ENCODE measurements at regions of chr15 and their contacts with region 1.

Region 1: DNA sequence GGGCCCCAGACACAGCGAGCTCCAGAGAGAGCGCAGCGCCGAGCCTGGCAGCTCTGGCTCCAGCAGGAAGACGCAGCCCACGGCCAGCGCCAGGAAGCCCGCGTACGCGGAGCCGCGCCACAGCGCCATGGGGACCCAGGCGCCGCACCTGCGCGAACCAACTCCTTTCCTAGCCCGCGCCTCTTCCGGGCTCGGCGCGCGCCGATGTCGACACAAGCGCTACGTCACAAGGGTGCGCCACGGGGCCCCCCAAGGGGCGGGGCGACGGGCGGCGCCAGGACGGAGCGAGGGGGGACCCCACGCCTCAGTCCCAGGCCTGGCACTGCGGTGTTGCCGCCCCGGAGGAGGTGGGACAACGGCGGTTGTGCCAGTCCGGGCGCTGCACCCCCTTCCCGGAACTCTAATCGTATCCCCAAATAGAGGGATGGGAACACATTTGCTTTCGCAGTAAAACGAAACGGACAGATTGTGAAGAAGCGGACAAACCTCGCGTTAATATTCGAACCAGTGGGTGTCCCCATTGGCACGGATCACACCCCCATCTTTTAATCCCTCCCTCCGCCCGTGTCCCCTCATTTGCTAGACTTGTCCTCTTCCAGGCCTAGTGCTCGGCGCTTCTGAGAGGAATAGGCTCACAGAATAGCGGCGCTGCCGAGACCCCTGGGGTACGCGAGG is at the start of gene ADPGK:
- DNase-seq: peak; percentile 88 to 98 (median 94)
- ATAC-seq: peak; percentile 74
- H3K4me3 ChIP-seq: peak within 1 kb of the TSS; percentile 94
- H3K4me3 Mint-ChIP-seq: peak within 1 kb of the TSS; percentile 96
- H3K27ac ChIP-seq: peak within 1 kb of the TSS; percentile 91 to 93
- H3K27ac Mint-ChIP-seq: peak within 1 kb of the TSS; percentile 98
- H3K4me1 ChIP-seq: peaks cover 50% of the 10 kb centered on the region
- H3K4me1 Mint-ChIP-seq: peaks cover 50% of the 10 kb centered on the region
- H3K27me3 ChIP-seq: no peaks in the 10 kb centered on the region
- H3K27me3 Mint-ChIP-seq: no peaks in the 10 kb centered on the region
- CTCF ChIP-seq: no peak
- total RNA-seq, gene ADPGK: 88.8 to 92.5 TPM

Region 2: GRCh38 chr15:72057548-72058091 is 726.1 kb before region 1 on chr15:
- CTCF ChIA-PET with region 1: no interaction called
- POLR2A ChIA-PET with region 1: no interaction called
- intact Hi-C with region 1: no loop called
- DNase-seq: no peak
- ATAC-seq: no peak
- H3K4me3 ChIP-seq: no peak overlapping the region
- H3K4me3 Mint-ChIP-seq: no peak overlapping the region
- H3K27ac ChIP-seq: no peak overlapping the region
- H3K27ac Mint-ChIP-seq: no peak overlapping the region
- H3K4me1 ChIP-seq: peaks cover 8% of the 10 kb centered on the region
- H3K4me1 Mint-ChIP-seq: peaks cover 32% of the 10 kb centered on the region
- H3K27me3 ChIP-seq: no peaks in the 10 kb centered on the region
- H3K27me3 Mint-ChIP-seq: no peaks in the 10 kb centered on the region
- CTCF ChIP-seq: no peak

Region 3: DNA sequence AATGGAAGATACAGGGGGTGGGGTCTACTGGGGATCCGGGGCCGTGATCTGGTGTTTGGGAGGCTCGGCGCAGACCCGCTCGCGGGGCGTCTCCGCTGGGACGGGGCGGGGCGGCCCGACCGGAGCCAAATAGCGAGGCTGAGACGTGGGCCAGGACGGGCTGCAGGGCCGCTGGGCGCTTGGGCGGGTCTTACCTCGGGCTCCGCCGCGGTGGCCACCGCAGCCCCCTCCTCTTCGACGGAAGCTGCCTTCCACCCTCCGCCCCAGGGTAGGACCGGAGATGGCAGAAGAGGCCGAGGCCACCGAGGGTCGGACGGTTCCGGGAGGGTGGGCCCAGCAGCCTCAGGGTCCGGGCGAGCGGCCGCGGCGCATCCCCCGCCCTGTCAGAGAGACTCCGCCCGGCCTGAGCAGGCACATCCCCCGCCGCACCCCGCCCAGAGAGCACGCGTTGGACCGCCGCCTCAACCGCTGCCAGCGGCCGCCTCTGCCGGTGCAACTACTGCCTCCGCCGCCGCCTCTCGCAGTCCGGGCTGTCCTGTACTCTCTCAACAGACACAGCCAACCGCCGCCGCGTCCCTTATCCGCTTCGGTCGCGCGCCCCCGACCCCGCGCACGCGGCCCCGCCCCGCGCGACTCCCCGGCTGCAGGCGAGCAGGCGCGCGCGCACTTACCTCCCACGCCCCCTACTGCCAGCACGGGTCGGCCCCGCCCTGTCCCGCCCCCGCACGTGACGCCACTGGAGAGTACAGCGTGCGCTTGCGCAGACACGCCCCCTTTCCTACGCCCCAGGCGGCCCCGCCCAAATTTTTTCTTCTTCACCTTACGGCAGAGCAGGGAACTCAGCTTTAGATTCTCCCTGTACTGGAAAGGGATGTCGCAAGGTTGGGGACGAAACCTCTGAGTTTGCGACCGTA is 666.0 kb before region 1 on chr15 and contains the start of gene MYO9A:
- CTCF ChIA-PET with region 1: no interaction called
- POLR2A ChIA-PET with region 1: no interaction called
- intact Hi-C with region 1: loop called in 1 of 2 experiments (anchors 5 kb)
- DNase-seq: peak; percentile 97 to 99 (median 99)
- ATAC-seq: peak; percentile 79
- H3K4me3 ChIP-seq: peak within 1 kb of the TSS; percentile 74
- H3K4me3 Mint-ChIP-seq: peak within 1 kb of the TSS; percentile 98
- H3K27ac ChIP-seq: peak within 1 kb of the TSS; percentile 91 to 92
- H3K27ac Mint-ChIP-seq: peak within 1 kb of the TSS; percentile 97
- H3K4me1 ChIP-seq: peaks cover 15% of the 10 kb centered on the region
- H3K4me1 Mint-ChIP-seq: peaks cover 60% of the 10 kb centered on the region
- H3K27me3 ChIP-seq: no peaks in the 10 kb centered on the region
- H3K27me3 Mint-ChIP-seq: no peaks in the 10 kb centered on the region
- CTCF ChIP-seq: no peak
- total RNA-seq, gene MYO9A: 23.4 to 29.1 TPM

Region 4: GRCh38 chr15:72473614-72474465 is 309.9 kb before region 1 on chr15 and contains the start of gene ARIH1:
- CTCF ChIA-PET with region 1: no interaction called
- POLR2A ChIA-PET with region 1: no interaction called
- intact Hi-C with region 1: loop called in 1 of 2 experiments (anchors 5 kb)
- DNase-seq: peak; percentile 91 to 99 (median 96)
- ATAC-seq: peak; percentile 68
- H3K4me3 ChIP-seq: peak within 1 kb of the TSS; percentile 87
- H3K4me3 Mint-ChIP-seq: peak within 1 kb of the TSS; percentile 89
- H3K27ac ChIP-seq: peak within 1 kb of the TSS; percentile 100
- H3K27ac Mint-ChIP-seq: peak within 1 kb of the TSS; percentile 99
- H3K4me1 ChIP-seq: peaks cover 36% of the 10 kb centered on the region
- H3K4me1 Mint-ChIP-seq: peaks cover 62% of the 10 kb centered on the region
- H3K27me3 ChIP-seq: no peaks in the 10 kb centered on the region
- H3K27me3 Mint-ChIP-seq: no peaks in the 10 kb centered on the region
- CTCF ChIP-seq: peak; percentile 23
- total RNA-seq, gene ARIH1: 281 to 283 TPM

Region 5: DNA sequence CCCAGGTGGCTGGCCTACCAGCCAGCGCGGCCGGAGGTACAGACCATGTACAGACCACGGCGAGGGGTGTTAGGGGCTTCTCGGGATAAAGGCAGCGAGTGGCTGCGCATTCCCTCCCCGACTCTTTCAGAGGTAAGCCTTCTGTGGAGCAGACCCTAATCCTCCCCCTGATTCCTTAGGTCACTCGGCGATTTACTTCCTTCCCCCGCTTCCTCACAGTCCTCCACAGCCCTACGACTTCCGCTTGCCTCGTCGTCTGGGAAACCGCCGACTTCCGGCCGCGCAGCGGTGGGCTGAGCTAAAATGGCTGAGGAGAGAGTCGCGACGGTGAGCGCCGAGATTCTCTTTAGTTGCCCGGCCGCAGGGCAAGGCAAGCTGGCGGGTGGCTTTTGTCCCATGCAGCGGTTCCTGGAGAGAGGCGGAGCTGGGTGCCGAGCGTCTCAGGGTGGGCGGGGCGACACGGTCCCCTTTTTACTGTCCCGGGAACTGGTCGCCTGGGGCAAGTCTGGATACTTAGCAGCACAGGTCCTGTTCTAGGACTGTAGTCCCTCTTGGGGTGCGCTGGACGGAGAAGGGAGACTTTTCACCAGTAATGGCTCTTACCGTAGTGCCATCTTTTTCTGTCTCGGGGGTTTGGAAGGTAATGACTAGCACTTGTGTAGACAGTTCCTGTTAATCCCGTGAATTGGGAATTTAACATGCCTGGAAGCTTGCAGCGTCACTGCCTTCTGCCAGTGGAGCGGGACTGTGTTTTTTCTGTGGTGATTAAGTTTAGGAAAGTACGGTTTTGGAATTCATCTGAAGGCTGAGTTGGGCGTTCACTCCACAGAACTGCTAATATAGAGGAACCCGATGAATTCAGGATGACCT is 97.5 kb before region 1 on chr15 and contains the starts of genes BBS4 and HIGD2B:
- CTCF ChIA-PET with region 1: no interaction called
- POLR2A ChIA-PET with region 1: interaction called, 6 read pairs
- intact Hi-C with region 1: loop called (anchors 1 kb)
- DNase-seq: peak; percentile 71 to 93 (median 82)
- ATAC-seq: peak; percentile 92
- H3K4me3 ChIP-seq: peak within 1 kb of the TSS; percentile 75
- H3K4me3 Mint-ChIP-seq: peak within 1 kb of the TSS; percentile 94
- H3K27ac ChIP-seq: peak within 1 kb of the TSS; percentile 77 to 81
- H3K27ac Mint-ChIP-seq: peak within 1 kb of the TSS; percentile 96
- H3K4me1 ChIP-seq: peaks cover 17% of the 10 kb centered on the region
- H3K4me1 Mint-ChIP-seq: peaks cover 18% of the 10 kb centered on the region
- H3K27me3 ChIP-seq: no peaks in the 10 kb centered on the region
- H3K27me3 Mint-ChIP-seq: no peaks in the 10 kb centered on the region
- CTCF ChIP-seq: no peak
- total RNA-seq, gene BBS4: 8.6 to 12.8 TPM
- total RNA-seq, gene HIGD2B: 0.28 TPM in 1 of 2 experiments, not detected in the other

Region 6: GRCh38 chr15:72740219-72740618 is 43.5 kb before region 1 on chr15:
- CTCF ChIA-PET with region 1: no interaction called
- POLR2A ChIA-PET with region 1: interaction called, 5 read pairs
- intact Hi-C with region 1: loop called in 1 of 2 experiments (anchors 1 kb)
- DNase-seq: peak in 3 of 14 experiments; percentile 13 to 76 (median 35)
- ATAC-seq: peak; percentile 77
- H3K4me3 ChIP-seq: no peak overlapping the region
- H3K4me3 Mint-ChIP-seq: peak overlapping the region; percentile 50
- H3K27ac ChIP-seq: peak overlapping the region in 1 of 2 donors; percentile 50
- H3K27ac Mint-ChIP-seq: peak overlapping the region; percentile 71
- H3K4me1 ChIP-seq: peaks cover 8% of the 10 kb centered on the region
- H3K4me1 Mint-ChIP-seq: peaks cover 40% of the 10 kb centered on the region
- H3K27me3 ChIP-seq: no peaks in the 10 kb centered on the region
- H3K27me3 Mint-ChIP-seq: no peaks in the 10 kb centered on the region
- CTCF ChIP-seq: no peak

Region 7: DNA sequence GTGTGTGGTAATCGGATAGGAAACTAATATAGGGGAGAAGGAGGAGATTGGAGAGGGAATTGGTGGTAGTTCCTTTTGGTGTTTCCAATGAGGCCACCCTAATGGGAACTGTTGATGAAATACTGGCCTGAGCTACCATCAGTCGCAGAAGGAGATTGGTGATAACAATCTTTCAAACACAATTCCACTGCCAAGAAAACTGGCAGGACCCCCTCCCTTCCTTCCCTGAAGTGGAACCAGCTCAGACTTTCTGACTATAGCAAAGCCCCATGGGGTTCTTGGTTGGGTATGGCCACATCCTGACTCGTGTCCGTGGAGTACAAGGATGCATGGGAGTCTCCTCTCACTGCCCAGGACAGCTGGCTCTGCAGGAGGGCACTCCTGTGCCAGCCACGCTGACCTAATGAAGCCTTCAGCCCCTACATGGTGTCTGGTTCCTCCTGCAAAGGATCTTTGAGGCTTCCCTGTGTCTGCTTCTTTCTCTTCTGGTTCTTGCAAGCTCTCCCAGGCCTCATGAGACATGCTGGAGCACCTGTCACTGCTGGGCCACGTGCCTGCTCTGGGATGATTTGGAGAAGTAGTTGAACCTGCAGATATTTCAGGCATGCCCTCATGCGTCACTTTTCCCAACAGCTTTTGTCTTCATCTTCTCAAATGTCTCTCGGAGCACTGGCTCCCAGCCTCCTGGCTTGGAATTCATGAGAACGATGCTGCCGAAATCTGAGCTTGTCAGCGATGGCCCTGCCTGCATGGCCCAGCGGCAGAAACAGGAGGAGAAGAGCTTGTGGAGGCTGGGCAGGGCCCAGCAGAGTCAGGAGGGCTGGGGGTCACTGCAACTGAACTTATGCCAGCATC is 89.9 kb after region 1 on chr15:
- CTCF ChIA-PET with region 1: no interaction called
- POLR2A ChIA-PET with region 1: no interaction called
- intact Hi-C with region 1: no loop called
- DNase-seq: no peak
- ATAC-seq: no peak
- H3K4me3 ChIP-seq: no peak overlapping the region
- H3K4me3 Mint-ChIP-seq: no peak overlapping the region
- H3K27ac ChIP-seq: no peak overlapping the region
- H3K27ac Mint-ChIP-seq: no peak overlapping the region
- H3K4me1 ChIP-seq: no peaks in the 10 kb centered on the region
- H3K4me1 Mint-ChIP-seq: no peaks in the 10 kb centered on the region
- H3K27me3 ChIP-seq: peaks cover 4 to 7% of the 10 kb centered on the region in 2 experiments
- H3K27me3 Mint-ChIP-seq: peaks cover 9% of the 10 kb centered on the region
- CTCF ChIP-seq: no peak

Region 8: DNA sequence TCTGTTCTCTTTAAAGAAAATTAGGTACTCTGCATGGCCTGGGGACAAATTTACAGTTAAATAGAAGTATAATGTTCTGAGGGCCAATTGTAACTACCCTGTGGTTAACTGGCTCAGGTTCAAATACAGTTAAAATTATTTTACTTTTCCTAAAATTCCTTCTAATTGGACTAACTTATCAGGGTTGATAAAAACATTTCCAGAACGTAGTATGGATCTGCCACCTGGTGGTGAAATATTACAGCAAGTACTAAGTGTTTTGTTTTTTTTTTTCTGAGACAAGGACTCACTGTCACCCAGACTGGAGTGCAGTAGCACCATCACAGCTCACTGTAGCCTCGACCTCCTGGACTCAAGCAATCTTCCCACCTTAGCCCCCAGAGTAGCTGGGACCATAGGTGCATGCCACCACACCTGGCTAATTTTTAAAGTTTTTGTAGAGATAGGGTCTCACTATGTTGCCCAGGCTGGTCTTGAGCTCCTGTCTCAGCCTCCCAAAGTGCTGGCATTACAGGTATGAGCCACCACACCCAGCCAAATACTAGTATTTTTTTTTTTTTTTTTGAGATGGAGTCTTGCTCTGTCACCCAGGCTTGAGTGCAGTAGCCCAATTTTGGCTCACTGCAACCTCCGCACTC is 297.7 kb after region 1 on chr15:
- CTCF ChIA-PET with region 1: no interaction called
- POLR2A ChIA-PET with region 1: no interaction called
- intact Hi-C with region 1: loop called (anchors 1 to 2 kb)
- DNase-seq: peak in 5 of 14 experiments; percentile 0 to 71 (median 49)
- ATAC-seq: peak; percentile 54
- H3K4me3 ChIP-seq: no peak overlapping the region
- H3K4me3 Mint-ChIP-seq: no peak overlapping the region
- H3K27ac ChIP-seq: no peak overlapping the region
- H3K27ac Mint-ChIP-seq: no peak overlapping the region
- H3K4me1 ChIP-seq: no peaks in the 10 kb centered on the region
- H3K4me1 Mint-ChIP-seq: no peaks in the 10 kb centered on the region
- H3K27me3 ChIP-seq: no peaks in the 10 kb centered on the region
- H3K27me3 Mint-ChIP-seq: peaks cover 4% of the 10 kb centered on the region
- CTCF ChIP-seq: peak; percentile 68

Region 9: DNA sequence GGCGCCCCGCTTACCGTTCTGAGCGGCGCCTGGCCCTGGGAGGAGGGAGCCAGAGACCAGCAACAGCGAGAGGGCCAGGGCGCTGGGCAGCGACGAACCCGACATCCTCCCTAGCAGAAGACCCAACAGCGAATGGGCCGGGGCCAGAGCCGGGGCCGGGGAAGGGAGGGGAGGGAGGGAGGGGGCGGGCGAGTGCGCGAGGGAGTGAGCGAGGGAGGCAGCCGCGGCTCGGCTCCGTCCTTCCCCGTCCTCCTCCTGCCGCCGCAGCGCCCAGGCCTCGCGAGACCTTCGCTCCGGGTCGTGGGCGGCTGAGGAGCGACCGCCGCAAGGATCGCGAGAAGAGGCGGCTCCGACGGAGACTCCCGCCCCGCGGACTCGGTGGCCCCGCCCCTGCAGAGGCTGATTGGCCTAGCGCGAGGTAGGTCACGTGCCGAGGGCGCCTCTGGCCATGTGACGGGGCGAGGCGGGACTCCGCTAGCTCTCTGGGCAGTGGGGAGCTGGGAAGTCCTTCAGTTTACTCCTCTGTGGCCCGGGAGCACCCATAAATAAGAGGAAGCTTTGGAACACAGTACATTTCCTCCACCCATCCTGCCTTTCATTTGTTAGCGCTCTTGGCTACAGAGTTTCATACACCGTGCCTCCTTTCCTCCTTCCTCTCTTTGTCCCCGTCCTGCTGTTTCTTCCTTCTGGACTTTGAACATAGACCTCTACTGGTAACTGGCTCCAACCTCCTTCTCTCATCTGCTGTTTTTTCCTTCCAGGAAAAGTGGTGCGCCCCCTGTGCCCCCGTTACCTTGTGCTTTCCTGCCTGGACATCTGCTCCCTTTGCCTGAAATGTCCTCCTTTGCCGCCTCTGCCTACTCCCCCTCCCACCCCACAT is 849.7 kb after region 1 on chr15 and contains the start of gene NPTN:
- CTCF ChIA-PET with region 1: no interaction called
- POLR2A ChIA-PET with region 1: interaction called, 3 read pairs
- intact Hi-C with region 1: loop called in 1 of 2 experiments (anchors 5 kb)
- DNase-seq: peak; percentile 94 to 99 (median 98)
- ATAC-seq: peak; percentile 89
- H3K4me3 ChIP-seq: peak within 1 kb of the TSS; percentile 86
- H3K4me3 Mint-ChIP-seq: peak within 1 kb of the TSS; percentile 93
- H3K27ac ChIP-seq: peak within 1 kb of the TSS; percentile 8 to 62
- H3K27ac Mint-ChIP-seq: peak within 1 kb of the TSS; percentile 60
- H3K4me1 ChIP-seq: peaks cover 24% of the 10 kb centered on the region
- H3K4me1 Mint-ChIP-seq: peaks cover 54% of the 10 kb centered on the region
- H3K27me3 ChIP-seq: no peaks in the 10 kb centered on the region
- H3K27me3 Mint-ChIP-seq: peaks cover 9% of the 10 kb centered on the region
- CTCF ChIP-seq: no peak
- total RNA-seq, gene NPTN: 9.3 to 13.5 TPM

Measured in CD4-positive, alpha-beta T cell (primary cell).